Aorta (tissue), 5 donors: ENCODE measurements at regions of chr11 and their contacts with region 1.

Region 1: GRCh38 chr11:5380740-5381342 is 2.8 kb upstream of the OR51M1 start:
- DNase-seq: peak; percentile 55 to 57
- ATAC-seq: peak; percentile 68
- H3K4me3 ChIP-seq: no peak overlapping the region
- H3K27ac ChIP-seq: no peak overlapping the region
- H3K4me1 ChIP-seq: no peaks in the 10 kb centered on the region
- H3K27me3 ChIP-seq: no peaks in the 10 kb centered on the region

Region 2: DNA sequence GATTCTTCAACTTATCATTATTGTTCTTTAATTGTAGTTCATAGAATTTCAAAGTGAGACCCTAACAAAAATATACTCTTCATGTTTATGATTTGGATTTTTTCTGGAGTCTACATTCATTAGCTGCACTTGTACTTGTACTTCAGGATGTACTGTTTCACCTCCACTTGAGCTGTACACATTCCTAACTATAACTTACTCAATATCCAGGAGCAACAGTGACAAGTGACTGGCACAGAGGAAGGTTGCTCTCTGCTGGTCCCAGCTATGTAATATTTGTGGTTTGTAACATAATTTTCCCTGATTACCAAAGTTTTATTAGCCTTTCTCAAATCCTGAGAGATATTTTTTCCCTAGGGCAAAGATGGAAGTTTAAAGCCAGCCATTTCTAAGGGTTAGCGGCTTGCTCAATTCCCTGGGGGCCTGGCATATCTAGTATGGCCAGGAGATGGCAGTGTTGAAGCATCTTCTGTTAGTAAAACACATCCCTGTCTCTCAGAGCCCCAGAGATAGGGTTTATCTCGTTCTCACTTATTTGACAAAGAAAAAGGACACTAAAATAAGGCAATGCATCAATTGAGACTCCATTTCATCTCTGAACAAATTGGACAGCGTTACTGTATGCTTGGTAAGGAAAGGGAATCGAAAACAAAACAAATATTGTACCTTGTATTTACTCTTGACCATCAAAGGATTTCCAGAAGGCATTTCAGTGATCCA is 256.9 kb before region 1 on chr11:
- intact Hi-C with region 1: loop called (anchors 2 to 10 kb)
- DNase-seq: peak; percentile 53 to 62
- ATAC-seq: peak; percentile 63
- H3K4me3 ChIP-seq: no peak overlapping the region
- H3K27ac ChIP-seq: no peak overlapping the region
- H3K4me1 ChIP-seq: no peaks in the 10 kb centered on the region
- H3K27me3 ChIP-seq: no peaks in the 10 kb centered on the region

Region 3: GRCh38 chr11:5204787-5205186 is 176.1 kb before region 1 on chr11:
- intact Hi-C with region 1: loop called in 1 of 2 experiments (anchors 2 kb)
- DNase-seq: no peak
- ATAC-seq: peak; percentile 50
- H3K4me3 ChIP-seq: no peak overlapping the region
- H3K27ac ChIP-seq: no peak overlapping the region
- H3K4me1 ChIP-seq: no peaks in the 10 kb centered on the region
- H3K27me3 ChIP-seq: no peaks in the 10 kb centered on the region

Region 4: DNA sequence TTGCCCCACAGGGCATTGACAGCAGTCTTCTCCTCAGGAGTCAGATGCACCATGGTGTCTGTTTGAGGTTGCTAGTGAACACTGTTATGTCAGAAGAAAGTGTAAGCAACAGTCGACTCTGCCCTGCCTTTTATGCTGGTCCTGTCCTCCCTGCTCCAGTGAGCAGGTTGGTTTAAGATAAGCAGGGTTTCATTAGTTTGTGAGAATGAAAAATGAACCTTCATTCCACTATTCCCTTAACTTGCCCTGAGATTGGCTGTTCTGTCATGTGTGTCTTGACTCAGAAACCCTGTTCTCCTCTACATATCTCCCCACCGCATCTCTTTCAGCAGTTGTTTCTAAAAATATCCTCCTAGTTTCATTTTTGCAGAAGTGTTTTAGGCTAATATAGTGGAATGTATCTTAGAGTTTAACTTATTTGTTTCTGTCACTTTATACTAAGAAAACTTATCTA is 146.4 kb before region 1 on chr11 and contains the start of gene HBD:
- intact Hi-C with region 1: no loop called
- DNase-seq: no peak
- ATAC-seq: no peak
- H3K4me3 ChIP-seq: no peak within 1 kb of the TSS
- H3K27ac ChIP-seq: no peak within 1 kb of the TSS
- H3K4me1 ChIP-seq: no peaks in the 10 kb centered on the region
- H3K27me3 ChIP-seq: no peaks in the 10 kb centered on the region
- total RNA-seq, gene HBD: 8.4 TPM in 1 of 2 donors, not detected in the other

Region 5: DNA sequence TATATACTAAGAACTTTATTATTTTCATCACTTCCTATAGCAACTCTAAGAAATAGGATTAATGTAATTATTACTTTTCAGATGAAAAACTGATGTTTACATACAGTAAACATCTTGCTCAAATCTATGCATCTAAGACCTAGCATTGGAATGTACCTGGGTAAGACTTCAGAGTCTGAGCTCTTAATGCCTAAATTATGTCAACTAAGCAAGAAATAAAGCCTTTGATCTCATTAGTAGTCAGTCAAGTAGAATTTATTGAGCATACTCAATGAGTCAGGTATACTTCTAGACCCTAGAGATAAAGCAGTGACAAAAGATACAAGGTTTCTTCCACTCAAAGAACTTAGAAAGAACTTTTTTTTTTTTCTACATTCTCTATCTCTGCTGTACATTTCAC is 24.3 kb after region 1 on chr11:
- intact Hi-C with region 1: no loop called
- DNase-seq: no peak
- ATAC-seq: no peak
- H3K4me3 ChIP-seq: no peak overlapping the region
- H3K27ac ChIP-seq: no peak overlapping the region
- H3K4me1 ChIP-seq: no peaks in the 10 kb centered on the region
- H3K27me3 ChIP-seq: no peaks in the 10 kb centered on the region